Common myeloid progenitor, CD34-positive (primary cell): ENCODE measurements at regions of chr7 and their contacts with region 1.

Region 1: DNA sequence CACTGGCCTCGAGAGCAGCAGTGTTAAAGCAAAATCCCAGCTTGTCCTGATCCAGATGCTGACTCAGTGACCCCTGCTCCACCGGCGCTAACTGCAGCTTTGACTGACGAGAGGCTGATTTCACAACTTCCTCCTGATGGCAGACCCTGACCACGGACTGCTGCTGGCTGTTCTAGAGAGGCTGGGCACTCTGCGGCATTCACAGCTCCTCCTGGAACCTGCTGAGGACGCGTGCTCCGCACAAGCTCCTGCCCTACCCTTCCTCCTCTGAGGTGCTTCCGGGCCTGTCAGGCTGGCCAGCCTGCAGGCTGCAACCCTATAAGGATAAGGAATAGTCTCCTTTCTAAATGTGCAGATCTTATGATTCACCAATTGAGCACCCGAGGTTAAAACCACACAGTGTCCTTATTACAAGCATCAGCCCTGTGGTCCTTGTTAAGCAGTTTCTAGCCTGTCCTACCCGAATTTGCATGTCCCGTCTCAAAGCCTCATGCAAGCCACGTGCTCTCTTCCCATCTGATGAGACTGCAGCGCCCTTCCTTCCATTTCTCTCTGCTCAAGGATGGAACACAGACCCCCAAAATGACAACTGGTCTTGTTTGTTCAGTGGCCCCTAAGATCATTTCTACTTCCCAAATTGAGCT is 35.5 kb upstream of the NCAPG2 start:
- DNase-seq: peak; percentile 31 to 87 (median 78)
- H3K4me3 ChIP-seq: peak overlapping the region in 2 of 7 experiments; percentile 0 to 10
- H3K27ac ChIP-seq: peak overlapping the region in 1 of 2 experiments; percentile 12
- H3K4me1 ChIP-seq: peaks cover 0 to 20% (median 13%) of the 10 kb centered on the region in 4 experiments
- H3K27me3 ChIP-seq: no peaks in the 10 kb centered on the region

Region 2: DNA sequence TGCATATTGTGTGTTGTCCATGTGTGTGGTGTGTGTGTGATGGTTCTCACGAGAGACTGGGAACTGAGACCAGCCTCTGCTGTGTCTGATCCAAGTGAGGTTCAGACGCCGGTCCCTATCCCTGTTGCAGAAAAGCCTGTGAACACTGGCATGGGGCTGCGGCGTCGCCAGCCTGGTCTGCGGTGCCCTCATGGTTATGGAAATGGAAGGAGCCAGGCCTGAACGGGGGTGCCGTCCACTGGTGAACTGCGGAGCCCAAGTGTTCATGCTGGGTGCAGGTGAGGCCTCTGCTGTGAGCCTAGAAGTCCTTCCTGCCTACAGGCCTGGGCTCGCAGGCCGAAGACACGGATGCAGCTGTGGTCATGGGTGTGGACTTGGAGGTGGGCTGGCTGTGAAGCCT is 16.9 kb before region 1 on chr7:
- CTCF ChIA-PET with region 1: no interaction called
- POLR2A ChIA-PET with region 1: no interaction called
- DNase-seq: no peak
- H3K4me3 ChIP-seq: no peak overlapping the region
- H3K27ac ChIP-seq: no peak overlapping the region
- H3K4me1 ChIP-seq: no peaks in the 10 kb centered on the region
- H3K27me3 ChIP-seq: peaks cover 0 to 3% (median 0%) of the 10 kb centered on the region in 5 experiments

Region 3: DNA sequence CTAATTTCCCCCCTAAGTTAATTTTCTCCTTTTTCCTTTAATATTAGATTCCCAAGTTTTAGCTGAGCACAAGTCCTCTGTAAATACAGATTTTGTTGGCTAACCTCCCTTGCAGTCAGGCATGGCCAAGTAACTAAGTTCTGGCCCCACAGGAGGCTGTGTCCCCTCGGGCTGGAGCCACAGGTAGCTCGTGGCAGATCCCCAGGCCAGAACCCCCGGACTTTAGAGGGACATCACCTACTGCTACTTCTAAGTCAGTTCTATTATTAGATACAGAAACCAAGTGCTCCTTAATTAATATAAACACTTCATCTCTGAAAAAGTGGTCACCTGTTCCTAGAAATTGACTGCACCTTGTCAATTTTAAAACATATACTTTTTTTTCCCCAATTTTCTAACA is 10.6 kb after region 1 on chr7:
- CTCF ChIA-PET with region 1: interaction called, 19 read pairs
- POLR2A ChIA-PET with region 1: no interaction called
- DNase-seq: no peak
- H3K4me3 ChIP-seq: no peak overlapping the region
- H3K27ac ChIP-seq: no peak overlapping the region
- H3K4me1 ChIP-seq: no peaks in the 10 kb centered on the region
- H3K27me3 ChIP-seq: no peaks in the 10 kb centered on the region

Region 4: DNA sequence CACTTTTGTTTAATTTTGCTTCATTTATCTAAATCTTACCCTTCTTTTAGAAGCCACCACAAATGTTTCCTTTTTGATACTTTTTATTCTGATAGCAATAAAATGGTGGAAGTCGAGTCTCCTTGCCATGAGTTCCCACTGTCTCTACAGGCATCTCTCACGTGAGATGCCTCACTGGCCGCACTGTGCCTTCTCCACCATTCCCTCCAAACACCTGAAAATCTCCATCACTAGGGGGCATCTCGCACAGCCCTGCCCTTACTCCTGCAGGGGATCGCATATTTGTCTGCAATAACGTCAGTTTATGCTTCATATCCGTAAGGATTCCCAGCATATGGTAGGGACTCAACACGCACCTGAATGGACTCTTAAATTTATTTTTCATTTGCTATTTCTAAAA is 20.8 kb after region 1 on chr7:
- CTCF ChIA-PET with region 1: interaction called, 10 read pairs
- POLR2A ChIA-PET with region 1: no interaction called
- DNase-seq: no peak
- H3K4me3 ChIP-seq: no peak overlapping the region
- H3K27ac ChIP-seq: no peak overlapping the region
- H3K4me1 ChIP-seq: no peaks in the 10 kb centered on the region
- H3K27me3 ChIP-seq: no peaks in the 10 kb centered on the region